PC-9 (cell line): ENCODE measurements at regions of chr7 and their contacts with region 1.

Region 1: GRCh38 chr7:8217200-8218068 is 44.5 kb downstream of the ICA1 start:
- DNase-seq: peak; percentile 8 to 59
- H3K4me3 ChIP-seq: no peak overlapping the region
- H3K27ac ChIP-seq: no peak overlapping the region
- H3K4me1 ChIP-seq: peaks cover 7% of the 10 kb centered on the region; the same call in 1 of the 2 replicates
- H3K27me3 ChIP-seq: no peaks in the 10 kb centered on the region
- CTCF ChIP-seq: peak; percentile 94

Region 2: DNA sequence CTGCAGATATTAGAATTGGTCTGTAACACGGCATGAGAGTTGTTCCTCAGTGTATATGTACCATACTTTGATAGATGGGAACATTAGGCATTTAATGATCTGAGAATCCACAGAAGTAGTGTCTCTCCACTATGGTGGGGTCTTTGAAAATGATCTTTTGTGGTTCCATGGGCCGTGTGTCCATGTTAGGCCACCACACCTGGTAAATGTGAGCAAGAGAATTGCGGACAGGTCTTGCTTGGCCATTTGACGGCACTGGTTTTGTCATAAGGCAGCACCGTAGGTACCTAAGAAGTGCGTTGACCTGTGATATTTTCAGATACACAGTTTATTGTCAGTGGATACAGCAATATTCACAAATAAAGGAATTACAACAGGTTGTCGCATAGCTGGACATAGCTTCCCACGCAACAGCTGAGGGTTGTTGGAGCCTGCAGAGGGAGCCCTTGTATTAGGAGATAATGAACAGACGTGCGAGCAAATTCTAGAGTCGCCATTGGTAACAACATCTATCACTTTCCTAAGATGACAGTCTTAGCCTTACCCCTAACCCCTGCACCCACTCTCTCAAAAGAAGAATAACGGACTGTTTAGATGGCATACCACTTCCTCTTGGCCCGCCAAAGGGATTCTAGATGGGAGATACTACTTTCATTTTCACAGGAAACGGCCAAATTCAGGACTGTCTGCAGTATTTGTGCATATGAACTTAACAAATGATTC is 793.1 kb before region 1 on chr7:
- CTCF ChIA-PET with region 1: no interaction called
- POLR2A ChIA-PET with region 1: no interaction called
- intact Hi-C with region 1: loop called (anchors 1 kb)
- DNase-seq: peak; percentile 55 to 60
- H3K4me3 ChIP-seq: peak overlapping the region; percentile 29; the same call in 1 of the 2 replicates
- H3K27ac ChIP-seq: no peak overlapping the region
- H3K4me1 ChIP-seq: no peaks in the 10 kb centered on the region
- H3K27me3 ChIP-seq: no peaks in the 10 kb centered on the region
- CTCF ChIP-seq: peak; percentile 88

Region 3: GRCh38 chr7:7595451-7595850 is 622.0 kb before region 1 on chr7:
- CTCF ChIA-PET with region 1: interaction called, 7 read pairs
- POLR2A ChIA-PET with region 1: no interaction called
- intact Hi-C with region 1: loop called (anchors 2 kb)
- DNase-seq: no peak
- H3K4me3 ChIP-seq: no peak overlapping the region
- H3K27ac ChIP-seq: no peak overlapping the region
- H3K4me1 ChIP-seq: no peaks in the 10 kb centered on the region
- H3K27me3 ChIP-seq: no peaks in the 10 kb centered on the region
- CTCF ChIP-seq: peak; percentile 77

Region 4: DNA sequence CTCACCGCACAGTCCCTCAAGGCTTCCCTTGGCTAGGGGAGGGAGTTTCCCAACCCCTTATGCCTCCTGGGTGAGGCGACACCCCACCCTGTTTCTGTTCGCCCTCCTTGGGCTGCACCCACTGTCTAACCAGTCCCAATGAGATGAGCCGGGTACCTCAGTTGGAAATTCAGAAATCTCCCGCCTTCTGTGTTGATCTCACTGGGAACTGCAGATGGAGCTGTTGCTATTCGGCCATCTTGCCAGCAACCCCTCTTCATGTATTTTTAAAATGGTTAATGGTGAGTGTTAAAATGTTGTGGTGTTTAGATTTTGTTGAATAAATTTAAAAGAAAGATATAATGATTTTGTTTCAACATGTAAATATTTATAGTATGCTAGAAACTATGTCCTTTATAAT is 554.9 kb before region 1 on chr7:
- CTCF ChIA-PET with region 1: no interaction called
- POLR2A ChIA-PET with region 1: no interaction called
- intact Hi-C with region 1: loop called (anchors 5 kb)
- DNase-seq: peak in 1 of 2 experiments; percentile 7
- H3K4me3 ChIP-seq: no peak overlapping the region
- H3K27ac ChIP-seq: no peak overlapping the region
- H3K4me1 ChIP-seq: no peaks in the 10 kb centered on the region
- H3K27me3 ChIP-seq: no peaks in the 10 kb centered on the region
- CTCF ChIP-seq: peak; percentile 56